Activated CD8-positive, alpha-beta memory T cell treated with anti-CD3 and anti-CD28 coated beads, Interleukin-2, amount 10 ng/mL, durations not matched to agents 7 days and 5 days (primary cell): ENCODE measurements at regions of chr7 and their contacts with region 1.

Region 1: GRCh38 chr7:131188367-131189339 is 139.0 kb upstream of the MKLN1 start:
- DNase-seq: peak; percentile 76
- ATAC-seq: peak; percentile 89
- H3K4me3 Mint-ChIP-seq: peak overlapping the region; percentile 13
- H3K27ac Mint-ChIP-seq: peak overlapping the region; percentile 92
- H3K4me1 Mint-ChIP-seq: peaks cover 56% of the 10 kb centered on the region
- H3K27me3 Mint-ChIP-seq: no peaks in the 10 kb centered on the region

Region 2: GRCh38 chr7:131107337-131108211 is 81.1 kb before region 1 on chr7:
- CTCF ChIA-PET with region 1: interaction called, 13 read pairs
- DNase-seq: peak; percentile 91
- ATAC-seq: peak; percentile 45
- H3K4me3 Mint-ChIP-seq: peak overlapping the region; percentile 90
- H3K27ac Mint-ChIP-seq: peak overlapping the region; percentile 99
- H3K4me1 Mint-ChIP-seq: peaks cover 65% of the 10 kb centered on the region
- H3K27me3 Mint-ChIP-seq: no peaks in the 10 kb centered on the region

Region 3: GRCh38 chr7:131164025-131164899 is 24.4 kb before region 1 on chr7:
- CTCF ChIA-PET with region 1: no interaction called
- DNase-seq: no peak
- ATAC-seq: no peak
- H3K4me3 Mint-ChIP-seq: no peak overlapping the region
- H3K27ac Mint-ChIP-seq: no peak overlapping the region
- H3K4me1 Mint-ChIP-seq: no peaks in the 10 kb centered on the region
- H3K27me3 Mint-ChIP-seq: no peaks in the 10 kb centered on the region

Region 4: GRCh38 chr7:131235489-131236317 is 47.0 kb after region 1 on chr7:
- CTCF ChIA-PET with region 1: interaction called, 12 read pairs
- DNase-seq: peak; percentile 92
- ATAC-seq: peak; percentile 82
- H3K4me3 Mint-ChIP-seq: peak overlapping the region; percentile 35
- H3K27ac Mint-ChIP-seq: peak overlapping the region; percentile 93
- H3K4me1 Mint-ChIP-seq: peaks cover 65% of the 10 kb centered on the region
- H3K27me3 Mint-ChIP-seq: no peaks in the 10 kb centered on the region

Region 5: GRCh38 chr7:131249003-131249402 is 60.4 kb after region 1 on chr7:
- CTCF ChIA-PET with region 1: no interaction called
- DNase-seq: no peak
- ATAC-seq: no peak
- H3K4me3 Mint-ChIP-seq: no peak overlapping the region
- H3K27ac Mint-ChIP-seq: no peak overlapping the region
- H3K4me1 Mint-ChIP-seq: peaks cover 5% of the 10 kb centered on the region
- H3K27me3 Mint-ChIP-seq: no peaks in the 10 kb centered on the region